Endothelial cell of umbilical vein (primary cell): ENCODE measurements at regions of chr5 and their contacts with region 1.

Region 1: GRCh38 chr5:39074016-39074886 is at the start of gene RICTOR:
- DNase-seq: peak; percentile 91
- H3K4me3 ChIP-seq: peak within 1 kb of the TSS; percentile 89 to 99 (median 92)
- H3K27ac ChIP-seq: peak within 1 kb of the TSS; percentile 90
- H3K4me1 ChIP-seq: peaks cover 35% of the 10 kb centered on the region
- H3K27me3 ChIP-seq: no peaks in the 10 kb centered on the region
- CTCF ChIP-seq: no peak
- POLR2A ChIP-seq: peak; percentile 83
- total RNA-seq, gene RICTOR: 38.0 and 39.5 TPM in 2 replicates

Region 2: GRCh38 chr5:38994324-38994927 is 79.8 kb before region 1 on chr5:
- CTCF ChIA-PET with region 1: no interaction called
- POLR2A ChIA-PET with region 1: no interaction called
- dilution Hi-C with region 1: no loop called
- intact Hi-C with region 1: loop called (anchors 2 kb)
- DNase-seq: peak; percentile 76
- H3K4me3 ChIP-seq: no peak overlapping the region
- H3K27ac ChIP-seq: no peak overlapping the region
- H3K4me1 ChIP-seq: no peaks in the 10 kb centered on the region
- H3K27me3 ChIP-seq: no peaks in the 10 kb centered on the region
- CTCF ChIP-seq: peak; percentile 33 to 50
- POLR2A ChIP-seq: no peak

Region 3: GRCh38 chr5:39117401-39117800 is 43.1 kb after region 1 on chr5:
- CTCF ChIA-PET with region 1: interaction called, 3 read pairs
- POLR2A ChIA-PET with region 1: no interaction called
- dilution Hi-C with region 1: no loop called
- intact Hi-C with region 1: loop called (anchors 1 kb)
- DNase-seq: peak; percentile 97
- H3K4me3 ChIP-seq: no peak overlapping the region
- H3K27ac ChIP-seq: peak overlapping the region; percentile 64
- H3K4me1 ChIP-seq: peaks cover 54% of the 10 kb centered on the region
- H3K27me3 ChIP-seq: no peaks in the 10 kb centered on the region
- CTCF ChIP-seq: no peak
- POLR2A ChIP-seq: no peak

Region 4: GRCh38 chr5:39138892-39139291 is 64.6 kb after region 1 on chr5:
- CTCF ChIA-PET with region 1: no interaction called
- POLR2A ChIA-PET with region 1: no interaction called
- dilution Hi-C with region 1: no loop called
- intact Hi-C with region 1: loop called (anchors 2 kb)
- DNase-seq: peak; percentile 77
- H3K4me3 ChIP-seq: no peak overlapping the region
- H3K27ac ChIP-seq: peak overlapping the region; percentile 85
- H3K4me1 ChIP-seq: peaks cover 30% of the 10 kb centered on the region
- H3K27me3 ChIP-seq: no peaks in the 10 kb centered on the region
- CTCF ChIP-seq: no peak
- POLR2A ChIP-seq: no peak

Region 5: DNA sequence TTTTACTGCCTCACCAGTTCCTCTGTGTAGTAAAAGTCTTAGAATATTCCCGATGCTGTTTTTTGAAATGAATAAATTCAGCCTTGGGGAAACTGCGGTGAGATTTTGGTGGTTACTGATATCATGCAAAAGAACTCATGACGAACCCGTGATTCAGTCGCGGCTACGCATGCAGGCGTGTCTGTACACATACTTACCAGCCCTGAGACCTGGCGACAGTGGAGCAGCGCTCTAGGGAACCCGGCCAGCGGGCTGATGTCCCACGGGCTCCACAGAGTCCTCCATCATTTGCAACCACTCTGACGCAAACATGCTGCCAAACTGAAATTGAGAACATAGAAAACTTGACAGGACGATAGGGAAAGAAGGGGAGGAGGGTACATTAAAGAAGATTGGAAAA is 666.2 kb after region 1 on chr5:
- CTCF ChIA-PET with region 1: no interaction called
- POLR2A ChIA-PET with region 1: no interaction called
- dilution Hi-C with region 1: no loop called
- intact Hi-C with region 1: no loop called
- DNase-seq: no peak
- H3K4me3 ChIP-seq: no peak overlapping the region
- H3K27ac ChIP-seq: no peak overlapping the region
- H3K4me1 ChIP-seq: no peaks in the 10 kb centered on the region
- H3K27me3 ChIP-seq: no peaks in the 10 kb centered on the region
- CTCF ChIP-seq: no peak
- POLR2A ChIP-seq: no peak